ENCODE measurements at regions of chr4 and their contacts with region 1.

Region 1: DNA sequence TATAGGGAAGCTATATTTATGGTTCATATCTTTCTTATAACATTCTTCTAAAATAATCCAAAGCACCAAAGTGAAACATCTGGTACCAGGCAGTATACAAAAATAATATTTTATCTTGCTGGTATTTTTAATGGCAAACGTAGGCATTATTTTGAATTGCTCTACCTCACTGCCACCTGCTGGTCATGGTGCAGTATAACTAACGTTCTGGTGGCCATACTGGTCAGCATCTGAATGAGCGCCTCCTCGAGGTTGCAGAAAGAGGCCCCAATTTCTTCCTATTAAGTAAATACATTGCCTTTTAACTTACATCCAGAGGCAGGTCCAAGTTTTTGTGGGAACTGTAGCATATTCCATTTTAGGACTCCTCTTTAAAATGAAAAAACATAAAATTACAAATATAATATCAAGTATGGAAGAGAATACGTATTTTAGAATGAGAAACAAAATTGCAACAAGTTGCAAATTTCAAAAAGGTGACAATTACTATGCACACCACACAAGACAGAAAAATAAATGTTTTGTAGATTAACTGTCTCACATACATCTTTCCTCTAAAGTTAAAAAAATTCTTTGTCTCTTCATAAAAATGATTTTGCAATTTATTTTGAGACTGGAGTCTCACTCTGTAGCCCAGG is 22.9 kb upstream of the CWH43 start:
- DNase-seq: peak; percentile 62
- H3K4me3 ChIP-seq: no peak overlapping the region
- CTCF ChIP-seq: peak; percentile 93

Region 2: GRCh38 chr4:48290146-48290772 is 672.9 kb before region 1 on chr4:
- CTCF ChIA-PET with region 1: no interaction called
- POLR2A ChIA-PET with region 1: no interaction called
- DNase-seq: no peak
- H3K4me3 ChIP-seq: no peak overlapping the region
- CTCF ChIP-seq: peak; percentile 43

Region 3: DNA sequence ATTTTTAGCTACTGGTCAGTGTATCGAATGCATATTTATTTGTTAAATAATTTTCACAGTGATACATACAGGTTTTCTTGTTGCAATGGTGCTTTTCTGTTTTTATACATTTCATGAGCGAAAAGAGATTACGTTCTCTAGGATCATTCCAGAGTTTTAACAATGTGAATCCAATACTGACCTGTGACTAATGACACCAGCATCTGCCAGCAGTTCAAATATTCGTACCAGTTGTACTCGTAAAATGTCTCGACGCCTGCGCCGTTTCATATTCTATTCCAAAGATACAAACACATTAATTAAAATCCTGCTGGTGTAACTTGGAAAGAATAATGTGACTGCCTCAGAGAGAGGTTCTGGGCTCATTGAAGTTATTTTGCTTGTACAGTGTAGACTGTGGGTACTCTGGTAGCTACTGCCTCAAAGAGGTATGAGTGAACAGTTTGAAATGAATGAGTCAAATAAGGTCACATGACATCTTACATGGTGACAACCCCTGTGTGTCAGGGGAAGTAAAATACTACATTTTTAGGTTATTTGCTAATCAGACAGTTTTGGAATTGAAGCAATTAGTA is 392.4 kb before region 1 on chr4:
- CTCF ChIA-PET with region 1: interaction called, 11 read pairs
- POLR2A ChIA-PET with region 1: no interaction called
- DNase-seq: peak; percentile 29
- H3K4me3 ChIP-seq: no peak overlapping the region
- CTCF ChIP-seq: no peak

Region 4: GRCh38 chr4:48913346-48913745 is 49.8 kb before region 1 on chr4:
- CTCF ChIA-PET with region 1: interaction called, 10 read pairs
- POLR2A ChIA-PET with region 1: no interaction called
- DNase-seq: peak; percentile 65
- H3K4me3 ChIP-seq: no peak overlapping the region
- CTCF ChIP-seq: no peak

Measured in AG04449 (cell line).